ENCODE measurements at regions of chr20 and their contacts with region 1.

Region 1: DNA sequence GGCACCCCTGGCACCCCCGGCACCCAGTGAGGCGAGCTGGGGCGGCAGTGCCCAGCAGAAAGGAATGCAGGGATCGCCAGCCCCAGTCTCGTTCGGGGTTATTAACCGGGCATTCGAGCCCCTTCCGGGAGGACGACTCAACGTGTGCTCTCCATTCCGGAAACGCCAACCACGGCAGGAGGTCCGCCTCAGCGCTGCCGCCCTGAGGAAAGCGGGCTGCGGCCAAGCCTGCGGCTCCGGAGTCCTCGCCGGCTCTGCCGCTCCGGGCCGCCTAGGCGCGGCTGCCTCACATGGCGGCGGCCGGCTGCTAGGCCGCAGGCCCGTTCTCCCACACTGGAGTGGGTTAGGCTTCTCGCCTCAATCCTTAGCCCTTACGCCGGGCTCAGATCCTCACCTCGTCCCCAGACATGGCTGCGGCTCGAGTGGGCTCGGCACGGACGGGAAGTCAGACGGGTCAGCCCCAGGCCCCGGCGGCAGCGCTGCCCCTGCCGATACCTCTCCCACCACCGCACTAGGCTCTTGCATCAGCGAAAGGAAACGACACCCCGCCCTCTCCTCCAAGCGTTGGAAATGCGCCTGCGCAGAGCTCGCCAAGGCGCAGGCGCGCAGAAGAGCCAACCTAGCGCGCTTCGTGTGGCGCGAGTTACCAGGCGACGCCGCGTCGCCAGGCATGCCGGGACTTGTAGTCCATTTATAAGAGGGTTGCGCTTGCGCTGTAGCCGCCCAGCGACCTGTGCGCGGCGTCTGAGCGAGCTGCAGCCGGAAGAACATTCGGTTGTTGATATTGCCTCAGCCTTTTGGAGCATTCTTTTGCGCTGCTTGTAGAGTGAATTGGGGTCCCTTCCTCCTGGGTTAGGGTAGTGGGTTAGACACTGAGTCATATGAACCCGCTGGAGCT is at the start of gene EIF2S2:
- DNase-seq: peak; percentile 87
- ATAC-seq: peak; percentile 84
- H3K4me3 Mint-ChIP-seq: peak within 1 kb of the TSS; percentile 96
- H3K27ac Mint-ChIP-seq: peak within 1 kb of the TSS; percentile 98
- H3K4me1 Mint-ChIP-seq: peaks cover 49% of the 10 kb centered on the region
- H3K27me3 Mint-ChIP-seq: no peaks in the 10 kb centered on the region
- CTCF ChIP-seq: no peak
- total RNA-seq, gene EIF2S2: 58.3 and 62.2 TPM in 2 replicates

Region 2: DNA sequence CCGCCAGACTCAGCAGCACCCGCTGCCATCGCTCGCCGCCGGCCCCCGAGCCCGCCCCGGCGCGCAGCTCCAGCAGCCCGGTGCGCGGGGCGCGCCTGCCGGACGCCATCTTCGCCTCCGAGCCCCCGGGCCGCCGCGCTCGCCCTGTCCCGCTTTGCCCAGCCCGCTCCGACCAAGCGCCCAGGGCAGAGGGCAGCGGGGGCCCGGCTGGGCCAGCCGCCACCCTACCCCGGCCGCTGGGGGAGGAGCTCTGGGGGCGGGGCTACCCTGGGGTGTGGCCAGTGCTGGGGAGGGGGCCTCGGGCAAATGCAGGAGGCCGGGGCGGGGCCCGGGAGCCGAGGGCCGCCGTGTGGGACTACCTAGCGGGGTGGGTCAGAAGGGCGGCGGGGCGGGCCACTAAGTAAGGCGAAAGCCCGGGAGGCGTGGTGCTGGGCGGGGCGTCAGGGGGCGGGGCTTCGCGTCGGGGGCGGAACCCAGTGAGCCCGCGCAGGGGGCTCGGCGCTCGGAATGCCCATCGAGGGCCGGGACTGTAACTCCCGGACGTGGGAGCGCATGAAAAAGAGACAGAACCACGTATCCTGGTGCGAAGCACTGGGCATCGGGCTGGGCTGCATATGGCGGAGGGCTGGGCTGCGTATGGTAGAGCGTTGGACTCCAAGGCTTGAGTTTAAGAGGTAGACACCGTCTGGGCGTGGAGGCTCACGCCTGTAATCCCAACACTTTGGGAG is 668.3 kb before region 1 on chr20 and contains the start of gene SNTA1:
- CTCF ChIA-PET with region 1: no interaction called
- POLR2A ChIA-PET with region 1: interaction called, 7 read pairs
- intact Hi-C with region 1: loop called (anchors 5 kb)
- DNase-seq: peak; percentile 86
- ATAC-seq: peak; percentile 89
- H3K4me3 Mint-ChIP-seq: peak within 1 kb of the TSS; percentile 89
- H3K27ac Mint-ChIP-seq: peak within 1 kb of the TSS; percentile 83
- H3K4me1 Mint-ChIP-seq: peaks cover 29% of the 10 kb centered on the region
- H3K27me3 Mint-ChIP-seq: no peaks in the 10 kb centered on the region
- CTCF ChIP-seq: no peak
- total RNA-seq, gene SNTA1: 1.7 and 2.0 TPM in 2 replicates

Region 3: GRCh38 chr20:33781133-33781532 is 330.8 kb before region 1 on chr20:
- CTCF ChIA-PET with region 1: no interaction called
- POLR2A ChIA-PET with region 1: interaction called, 36 read pairs
- intact Hi-C with region 1: loop called (anchors 5 kb)
- DNase-seq: no peak
- ATAC-seq: no peak
- H3K4me3 Mint-ChIP-seq: peak overlapping the region; percentile 12
- H3K27ac Mint-ChIP-seq: peak overlapping the region; percentile 95
- H3K4me1 Mint-ChIP-seq: peaks cover 86% of the 10 kb centered on the region
- H3K27me3 Mint-ChIP-seq: no peaks in the 10 kb centered on the region
- CTCF ChIP-seq: no peak

Region 4: GRCh38 chr20:34089655-34090345 is 22.2 kb before region 1 on chr20:
- CTCF ChIA-PET with region 1: no interaction called
- POLR2A ChIA-PET with region 1: interaction called, 10 read pairs
- intact Hi-C with region 1: no loop called
- DNase-seq: no peak
- ATAC-seq: no peak
- H3K4me3 Mint-ChIP-seq: no peak overlapping the region
- H3K27ac Mint-ChIP-seq: no peak overlapping the region
- H3K4me1 Mint-ChIP-seq: no peaks in the 10 kb centered on the region
- H3K27me3 Mint-ChIP-seq: no peaks in the 10 kb centered on the region
- CTCF ChIP-seq: no peak

Measured in activated B cell treated with CpG ODN at 0.5 μM for 24 hours (primary cell).